T-cell (primary cell): ENCODE measurements at regions of chr2 and their contacts with region 1.

Region 1: GRCh38 chr2:67825476-67825875 is 237.3 kb downstream of the C1D start:
- DNase-seq: no peak
- ATAC-seq: no peak
- H3K4me3 ChIP-seq: no peak overlapping the region
- H3K4me3 Mint-ChIP-seq: no peak overlapping the region
- H3K27ac ChIP-seq: no peak overlapping the region
- H3K27ac Mint-ChIP-seq: no peak overlapping the region
- H3K4me1 ChIP-seq: no peaks in the 10 kb centered on the region
- H3K4me1 Mint-ChIP-seq: peaks cover 0 to 2% (median 0%) of the 10 kb centered on the region in 3 donors
- H3K27me3 ChIP-seq: no peaks in the 10 kb centered on the region
- H3K27me3 Mint-ChIP-seq: no peaks in the 10 kb centered on the region

Region 2: DNA sequence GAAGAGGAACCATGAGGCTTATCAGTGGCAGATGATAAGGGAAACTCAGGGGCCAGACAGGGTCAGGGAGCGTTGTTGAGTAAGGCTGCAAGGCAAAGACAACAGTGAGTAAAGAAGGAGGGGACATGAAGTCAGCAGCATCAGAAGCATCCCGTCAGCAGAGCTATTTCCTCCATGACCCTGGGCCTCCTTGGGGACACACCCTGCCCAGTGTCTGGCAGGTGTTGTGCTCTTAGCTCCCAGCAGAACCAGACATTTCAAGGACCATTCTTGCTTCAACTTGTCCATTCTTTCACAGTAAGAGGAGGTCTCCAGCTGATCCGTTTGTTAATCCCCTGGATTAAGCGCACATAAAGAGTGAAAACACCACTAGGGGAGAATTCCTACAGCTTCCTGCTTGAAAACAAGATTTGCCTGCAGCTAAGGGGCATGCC is 1479.2 kb before region 1 on chr2:
- CTCF ChIA-PET with region 1: no interaction called
- POLR2A ChIA-PET with region 1: no interaction called
- DNase-seq: no peak
- ATAC-seq: no peak
- H3K4me3 ChIP-seq: no peak overlapping the region
- H3K4me3 Mint-ChIP-seq: no peak overlapping the region
- H3K27ac ChIP-seq: no peak overlapping the region
- H3K27ac Mint-ChIP-seq: no peak overlapping the region
- H3K4me1 ChIP-seq: no peaks in the 10 kb centered on the region
- H3K4me1 Mint-ChIP-seq: no peaks in the 10 kb centered on the region
- H3K27me3 ChIP-seq: no peaks in the 10 kb centered on the region
- H3K27me3 Mint-ChIP-seq: no peaks in the 10 kb centered on the region

Region 3: GRCh38 chr2:67895227-67895941 is 69.9 kb after region 1 on chr2:
- CTCF ChIA-PET with region 1: no interaction called
- POLR2A ChIA-PET with region 1: interaction called in 1 of 2 experiments, 11 read pairs
- DNase-seq: no peak
- ATAC-seq: no peak
- H3K4me3 ChIP-seq: no peak overlapping the region
- H3K4me3 Mint-ChIP-seq: no peak overlapping the region
- H3K27ac ChIP-seq: no peak overlapping the region
- H3K27ac Mint-ChIP-seq: no peak overlapping the region
- H3K4me1 ChIP-seq: no peaks in the 10 kb centered on the region
- H3K4me1 Mint-ChIP-seq: no peaks in the 10 kb centered on the region
- H3K27me3 ChIP-seq: peaks cover 0 to 3% of the 10 kb centered on the region in 2 experiments
- H3K27me3 Mint-ChIP-seq: peaks cover 7 to 11% of the 10 kb centered on the region in 2 donors